ENCODE measurements at regions of chrX and their contacts with region 1.

Region 1: GRCh38 chrX:154013614-154014360 is 5.9 kb downstream of the IRAK1 start:
- DNase-seq: no peak
- ATAC-seq: peak; percentile 79
- H3K4me3 ChIP-seq: no peak overlapping the region
- H3K27ac ChIP-seq: no peak overlapping the region
- H3K4me1 ChIP-seq: peaks cover 6% of the 10 kb centered on the region
- H3K27me3 ChIP-seq: no peaks in the 10 kb centered on the region
- CTCF ChIP-seq: peak; percentile 79 to 98 (median 94)
- EP300 ChIP-seq: no peak
- POLR2A ChIP-seq: no peak
- RAD21 ChIP-seq: peak; percentile 51; the same call in 1 of the 2 replicates

Region 2: GRCh38 chrX:153910446-153910845 is 103.3 kb before region 1 on chrX:
- CTCF ChIA-PET with region 1: no interaction called
- POLR2A ChIA-PET with region 1: no interaction called
- RAD21 ChIA-PET with region 1: no interaction called
- SMC1A ChIA-PET with region 1: no interaction called
- in situ Hi-C with region 1: no loop called
- intact Hi-C with region 1: no loop called
- DNase-seq: no peak
- ATAC-seq: no peak
- H3K4me3 ChIP-seq: no peak overlapping the region
- H3K27ac ChIP-seq: no peak overlapping the region
- H3K4me1 ChIP-seq: no peaks in the 10 kb centered on the region
- H3K27me3 ChIP-seq: no peaks in the 10 kb centered on the region
- CTCF ChIP-seq: no peak
- EP300 ChIP-seq: no peak
- POLR2A ChIP-seq: no peak
- RAD21 ChIP-seq: no peak

Region 3: GRCh38 chrX:154002215-154002719 is 11.5 kb before region 1 on chrX:
- CTCF ChIA-PET with region 1: interaction called, 14 read pairs
- POLR2A ChIA-PET with region 1: interaction called, 9 read pairs
- RAD21 ChIA-PET with region 1: interaction called, 4 read pairs
- SMC1A ChIA-PET with region 1: interaction called, 3 read pairs
- in situ Hi-C with region 1: no loop called
- intact Hi-C with region 1: no loop called
- DNase-seq: no peak
- ATAC-seq: peak; percentile 84
- H3K4me3 ChIP-seq: no peak overlapping the region
- H3K27ac ChIP-seq: peak overlapping the region; percentile 72
- H3K4me1 ChIP-seq: peaks cover 15% of the 10 kb centered on the region
- H3K27me3 ChIP-seq: no peaks in the 10 kb centered on the region
- CTCF ChIP-seq: no peak
- EP300 ChIP-seq: no peak; a peak in 1 of 4 replicates
- POLR2A ChIP-seq: peak; percentile 38; the same call in 1 of the 2 replicates
- RAD21 ChIP-seq: no peak

Region 4: GRCh38 chrX:154029439-154029838 is 15.7 kb after region 1 on chrX:
- CTCF ChIA-PET with region 1: interaction called, 26 read pairs
- POLR2A ChIA-PET with region 1: interaction called, 3 read pairs
- RAD21 ChIA-PET with region 1: no interaction called
- SMC1A ChIA-PET with region 1: no interaction called
- in situ Hi-C with region 1: no loop called
- intact Hi-C with region 1: no loop called
- DNase-seq: no peak
- ATAC-seq: peak; percentile 51
- H3K4me3 ChIP-seq: no peak overlapping the region
- H3K27ac ChIP-seq: no peak overlapping the region
- H3K4me1 ChIP-seq: no peaks in the 10 kb centered on the region
- H3K27me3 ChIP-seq: no peaks in the 10 kb centered on the region; a peak in 1 of 4 replicates
- CTCF ChIP-seq: peak in 1 of 3 experiments; percentile 17; a peak in 1 of 6 replicates
- EP300 ChIP-seq: no peak
- POLR2A ChIP-seq: no peak
- RAD21 ChIP-seq: no peak

Region 5: DNA sequence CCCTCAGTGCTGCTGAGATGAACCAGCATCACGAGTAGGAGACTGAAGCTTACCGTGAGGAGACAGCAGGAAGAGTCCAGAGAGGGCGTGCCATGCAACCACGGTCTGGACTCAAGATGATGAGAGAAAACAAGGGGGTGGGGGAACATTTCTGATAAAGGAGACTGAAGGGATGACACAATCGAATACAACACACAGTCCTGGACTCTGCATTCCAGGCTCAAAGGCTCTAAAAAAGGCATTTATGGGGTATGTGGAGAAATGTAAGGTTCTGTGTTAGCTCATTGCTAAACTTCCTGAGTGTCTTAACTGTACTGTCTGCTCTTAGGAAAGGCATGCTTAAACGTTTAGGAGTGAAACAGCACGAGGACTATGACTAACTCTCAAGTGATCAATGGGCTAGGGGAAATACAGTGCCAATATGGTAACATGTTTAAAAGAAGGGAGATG is 26.5 kb after region 1 on chrX:
- CTCF ChIA-PET with region 1: interaction called, 20 read pairs
- POLR2A ChIA-PET with region 1: interaction called, 5 read pairs
- RAD21 ChIA-PET with region 1: interaction called, 10 read pairs
- SMC1A ChIA-PET with region 1: interaction called, 4 read pairs
- in situ Hi-C with region 1: no loop called
- intact Hi-C with region 1: no loop called
- DNase-seq: no peak
- ATAC-seq: peak; percentile 61
- H3K4me3 ChIP-seq: no peak overlapping the region
- H3K27ac ChIP-seq: no peak overlapping the region
- H3K4me1 ChIP-seq: no peaks in the 10 kb centered on the region
- H3K27me3 ChIP-seq: no peaks in the 10 kb centered on the region
- CTCF ChIP-seq: no peak
- EP300 ChIP-seq: no peak
- POLR2A ChIP-seq: no peak
- RAD21 ChIP-seq: no peak

Region 6: GRCh38 chrX:154051201-154051810 is 37.5 kb after region 1 on chrX:
- CTCF ChIA-PET with region 1: interaction called, 9 read pairs
- POLR2A ChIA-PET with region 1: interaction called, 3 read pairs
- RAD21 ChIA-PET with region 1: interaction called, 4 read pairs
- SMC1A ChIA-PET with region 1: interaction called, 3 read pairs
- in situ Hi-C with region 1: no loop called
- intact Hi-C with region 1: loop called (anchors 5 kb)
- DNase-seq: no peak
- ATAC-seq: peak; percentile 93
- H3K4me3 ChIP-seq: no peak overlapping the region
- H3K27ac ChIP-seq: no peak overlapping the region
- H3K4me1 ChIP-seq: no peaks in the 10 kb centered on the region
- H3K27me3 ChIP-seq: no peaks in the 10 kb centered on the region
- CTCF ChIP-seq: peak; percentile 74 to 85 (median 78)
- EP300 ChIP-seq: no peak
- POLR2A ChIP-seq: no peak
- RAD21 ChIP-seq: peak; percentile 68

Measured in GM12878 (cell line).